OCI-LY7 (cell line): ENCODE measurements at regions of chr6 and their contacts with region 1.

Region 1: GRCh38 chr6:148177589-148178233 is 164.9 kb upstream of the SASH1 start:
- DNase-seq: peak; percentile 6
- H3K4me3 ChIP-seq: no peak overlapping the region
- H3K27ac ChIP-seq: no peak overlapping the region
- H3K4me1 ChIP-seq: no peaks in the 10 kb centered on the region
- CTCF ChIP-seq: peak; percentile 76

Region 2: DNA sequence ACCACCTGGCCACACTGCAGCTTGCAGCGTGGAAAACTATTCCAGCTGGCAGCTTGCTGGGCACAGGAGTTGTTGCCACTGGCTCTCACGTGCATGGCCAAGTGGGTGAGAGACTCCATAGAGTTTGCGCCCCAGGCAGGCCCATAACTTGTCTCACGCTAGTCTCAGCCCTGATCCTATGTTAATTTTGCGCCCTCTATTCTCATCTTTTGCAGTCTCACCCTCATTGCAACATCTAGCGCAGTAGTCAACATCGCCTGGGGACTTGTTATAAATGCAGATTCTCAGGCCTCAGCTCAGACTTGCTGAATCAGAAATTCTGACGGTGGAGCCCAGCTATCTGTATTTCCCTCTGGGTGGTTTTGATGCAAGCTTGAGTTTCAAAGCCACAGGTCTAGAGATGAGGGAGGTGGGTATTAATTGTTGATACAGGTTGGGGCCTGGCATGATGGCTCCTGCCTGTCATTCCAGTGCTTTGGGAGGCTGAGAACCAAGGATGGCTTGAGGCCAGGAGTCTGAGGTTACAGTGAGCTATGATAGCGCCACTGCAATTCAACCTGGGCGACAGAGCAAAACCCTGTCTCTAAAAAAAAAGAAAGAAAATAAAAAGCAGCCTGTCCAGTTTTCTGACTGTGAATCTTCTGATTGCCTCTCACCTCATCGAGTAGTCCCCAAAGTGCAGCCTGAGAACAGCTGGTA is 20.0 kb before region 1 on chr6:
- CTCF ChIA-PET with region 1: no interaction called
- POLR2A ChIA-PET with region 1: no interaction called
- intact Hi-C with region 1: no loop called
- DNase-seq: no peak
- H3K4me3 ChIP-seq: no peak overlapping the region
- H3K27ac ChIP-seq: no peak overlapping the region
- H3K4me1 ChIP-seq: no peaks in the 10 kb centered on the region
- CTCF ChIP-seq: no peak

Region 3: GRCh38 chr6:148528292-148528691 is 350.6 kb after region 1 on chr6:
- CTCF ChIA-PET with region 1: no interaction called
- POLR2A ChIA-PET with region 1: no interaction called
- intact Hi-C with region 1: loop called (anchors 2 kb)
- DNase-seq: peak; percentile 19
- H3K4me3 ChIP-seq: no peak overlapping the region
- H3K27ac ChIP-seq: no peak overlapping the region
- H3K4me1 ChIP-seq: peaks cover 8% of the 10 kb centered on the region
- CTCF ChIP-seq: peak; percentile 58